ENCODE measurements at regions of chr12 and their contacts with region 1.

Region 1: GRCh38 chr12:57088459-57089248 is at the start of gene NAB2:
- DNase-seq: peak; percentile 79 to 91 (median 88)
- ATAC-seq: peak; percentile 84
- H3K4me3 ChIP-seq: peak within 1 kb of the TSS; percentile 94
- H3K4me3 Mint-ChIP-seq: peak within 1 kb of the TSS; percentile 94 to 98 (median 96)
- H3K27ac ChIP-seq: peak within 1 kb of the TSS; percentile 100
- H3K27ac Mint-ChIP-seq: peak within 1 kb of the TSS; percentile 94 to 99 (median 97)
- H3K4me1 ChIP-seq: peaks cover 23 to 46% of the 10 kb centered on the region in 2 donors
- H3K4me1 Mint-ChIP-seq: peaks cover 40 to 68% (median 58%) of the 10 kb centered on the region in 7 donors
- H3K27me3 ChIP-seq: no peaks in the 10 kb centered on the region
- H3K27me3 Mint-ChIP-seq: no peaks in the 10 kb centered on the region
- total RNA-seq, gene NAB2: 5.7 to 22.4 (median 15.5) TPM

Region 2: GRCh38 chr12:55817346-55818139 is 1271.1 kb before region 1 on chr12 and contains the starts of genes ORMDL2 and SARNP:
- CTCF ChIA-PET with region 1: no interaction called
- POLR2A ChIA-PET with region 1: no interaction called
- intact Hi-C with region 1: loop called in 1 of 2 experiments (anchors 5 kb)
- DNase-seq: peak; percentile 81 to 99 (median 98)
- ATAC-seq: peak; percentile 96
- H3K4me3 ChIP-seq: peak within 1 kb of the TSS; percentile 94
- H3K4me3 Mint-ChIP-seq: no peak within 1 kb of the TSS
- H3K27ac ChIP-seq: peak within 1 kb of the TSS; percentile 88
- H3K27ac Mint-ChIP-seq: no peak within 1 kb of the TSS
- H3K4me1 ChIP-seq: peaks cover 22 to 41% of the 10 kb centered on the region in 2 donors
- H3K4me1 Mint-ChIP-seq: peaks cover 32 to 45% (median 37%) of the 10 kb centered on the region in 7 donors
- H3K27me3 ChIP-seq: no peaks in the 10 kb centered on the region
- H3K27me3 Mint-ChIP-seq: no peaks in the 10 kb centered on the region
- total RNA-seq, gene ORMDL2: 12.3 to 67.3 (median 40.5) TPM
- total RNA-seq, gene SARNP: 28.0 to 73.0 (median 41.7) TPM

Region 3: GRCh38 chr12:56315622-56316473 is 772.8 kb before region 1 on chr12 and contains the start of gene CNPY2:
- CTCF ChIA-PET with region 1: no interaction called
- POLR2A ChIA-PET with region 1: no interaction called
- intact Hi-C with region 1: loop called in 1 of 2 experiments (anchors 5 kb)
- DNase-seq: peak; percentile 83 to 94 (median 92)
- ATAC-seq: peak; percentile 93
- H3K4me3 ChIP-seq: peak within 1 kb of the TSS; percentile 100
- H3K4me3 Mint-ChIP-seq: peak within 1 kb of the TSS; percentile 96 to 99 (median 98)
- H3K27ac ChIP-seq: peak within 1 kb of the TSS; percentile 97
- H3K27ac Mint-ChIP-seq: peak within 1 kb of the TSS; percentile 93 to 99 (median 99)
- H3K4me1 ChIP-seq: peaks cover 13 to 16% of the 10 kb centered on the region in 2 donors
- H3K4me1 Mint-ChIP-seq: peaks cover 5 to 23% (median 13%) of the 10 kb centered on the region in 7 donors
- H3K27me3 ChIP-seq: no peaks in the 10 kb centered on the region
- H3K27me3 Mint-ChIP-seq: no peaks in the 10 kb centered on the region
- total RNA-seq, gene CNPY2: 48.4 to 134 (median 87.6) TPM

Region 4: DNA sequence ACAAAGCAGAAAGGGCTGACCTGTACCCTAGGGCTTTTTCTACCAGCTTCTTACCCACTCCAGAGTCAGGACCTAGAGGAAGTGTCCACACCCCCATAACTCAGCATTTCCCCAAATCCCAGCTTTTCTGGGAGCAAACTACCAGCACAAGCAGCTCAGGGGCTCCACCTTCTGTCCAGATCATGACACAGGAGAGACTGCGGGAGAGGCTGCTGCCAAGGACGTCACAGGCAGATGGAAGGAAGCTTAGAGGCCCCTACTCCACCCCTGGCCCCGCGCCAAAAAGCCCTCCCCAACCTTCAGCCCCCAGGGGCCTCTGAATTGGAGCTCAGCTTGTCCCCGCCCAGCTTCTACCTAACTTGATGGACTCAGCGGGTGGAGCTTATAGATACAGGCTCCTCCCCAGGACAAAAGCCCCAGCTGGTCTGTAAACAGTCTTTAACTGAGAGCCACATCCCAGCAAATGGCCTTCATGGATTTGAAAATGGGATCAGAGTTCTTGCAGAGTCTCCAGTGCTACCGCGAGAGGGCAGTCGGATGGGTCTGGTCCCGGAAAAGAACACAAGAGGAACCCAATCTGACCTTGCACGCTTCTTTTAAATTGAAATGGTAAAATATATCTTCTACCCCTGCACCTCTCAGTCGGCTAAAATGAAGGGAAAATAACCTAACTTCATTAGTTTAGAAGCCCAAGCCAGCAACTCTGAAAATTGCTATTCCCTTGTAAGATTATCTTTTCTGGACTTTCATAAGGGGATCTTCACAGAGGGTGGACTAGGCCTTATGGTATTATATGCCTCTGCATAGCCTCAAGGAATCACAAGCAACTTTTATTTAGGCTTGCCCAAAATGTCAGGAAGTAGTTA is 451.7 kb before region 1 on chr12:
- CTCF ChIA-PET with region 1: no interaction called
- POLR2A ChIA-PET with region 1: interaction called, 3 read pairs
- intact Hi-C with region 1: loop called in 1 of 2 experiments (anchors 5 kb)
- DNase-seq: peak; percentile 86 to 99 (median 94)
- ATAC-seq: peak; percentile 83
- H3K4me3 ChIP-seq: peak overlapping the region; percentile 73
- H3K4me3 Mint-ChIP-seq: peak overlapping the region; percentile 87 to 100 (median 96)
- H3K27ac ChIP-seq: peak overlapping the region; percentile 83
- H3K27ac Mint-ChIP-seq: peak overlapping the region; percentile 89 to 99 (median 97)
- H3K4me1 ChIP-seq: peaks cover 27 to 36% of the 10 kb centered on the region in 2 donors
- H3K4me1 Mint-ChIP-seq: peaks cover 28 to 69% (median 57%) of the 10 kb centered on the region in 7 donors
- H3K27me3 ChIP-seq: no peaks in the 10 kb centered on the region
- H3K27me3 Mint-ChIP-seq: no peaks in the 10 kb centered on the region

Region 5: GRCh38 chr12:57005980-57006808 is 82.5 kb before region 1 on chr12 and contains the start of gene ZBTB39:
- CTCF ChIA-PET with region 1: no interaction called
- POLR2A ChIA-PET with region 1: interaction called, 3 read pairs
- intact Hi-C with region 1: loop called in 1 of 2 experiments (anchors 1 kb)
- DNase-seq: peak; percentile 51 to 84 (median 62)
- ATAC-seq: peak; percentile 91
- H3K4me3 ChIP-seq: peak within 1 kb of the TSS; percentile 63
- H3K4me3 Mint-ChIP-seq: peak within 1 kb of the TSS; percentile 90 to 94 (median 92)
- H3K27ac ChIP-seq: peak within 1 kb of the TSS; percentile 82
- H3K27ac Mint-ChIP-seq: peak within 1 kb of the TSS; percentile 92 to 95 (median 95)
- H3K4me1 ChIP-seq: peaks cover 20 to 46% of the 10 kb centered on the region in 2 donors
- H3K4me1 Mint-ChIP-seq: peaks cover 36 to 80% (median 76%) of the 10 kb centered on the region in 7 donors
- H3K27me3 ChIP-seq: no peaks in the 10 kb centered on the region
- H3K27me3 Mint-ChIP-seq: no peaks in the 10 kb centered on the region
- total RNA-seq, gene ZBTB39: 5.8 to 12.9 (median 10.7) TPM

Region 6: DNA sequence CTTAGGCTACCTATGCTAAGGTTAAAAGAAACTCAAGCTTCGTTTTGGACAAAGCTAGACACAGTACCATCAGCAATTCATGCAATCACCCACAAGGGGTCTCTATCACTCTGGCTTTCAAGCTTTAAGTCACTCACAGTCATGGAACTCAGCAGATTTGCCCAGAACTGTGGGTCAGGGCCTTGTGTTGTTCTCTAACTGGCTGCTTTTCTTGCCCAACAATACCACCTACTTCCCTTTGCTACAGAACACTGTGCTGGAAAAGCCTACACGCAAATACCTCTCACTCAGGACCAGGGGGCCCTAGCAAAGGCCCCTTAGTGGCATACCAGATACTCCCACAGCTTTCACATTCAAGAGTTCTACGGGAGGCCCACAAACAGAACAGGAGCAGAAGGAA is 19.1 kb before region 1 on chr12:
- CTCF ChIA-PET with region 1: interaction called, 44 read pairs
- POLR2A ChIA-PET with region 1: interaction called, 28 read pairs
- intact Hi-C with region 1: loop called (anchors 1 kb)
- DNase-seq: peak in 8 of 9 donors; percentile 42 to 79 (median 72)
- ATAC-seq: peak; percentile 100
- H3K4me3 ChIP-seq: no peak overlapping the region
- H3K4me3 Mint-ChIP-seq: peak overlapping the region in 8 of 10 donors; percentile 4 to 33 (median 20)
- H3K27ac ChIP-seq: peak overlapping the region; percentile 60
- H3K27ac Mint-ChIP-seq: peak overlapping the region; percentile 70 to 89 (median 83)
- H3K4me1 ChIP-seq: peaks cover 4 to 15% of the 10 kb centered on the region in 2 donors
- H3K4me1 Mint-ChIP-seq: peaks cover 13 to 50% (median 30%) of the 10 kb centered on the region in 7 donors
- H3K27me3 ChIP-seq: no peaks in the 10 kb centered on the region
- H3K27me3 Mint-ChIP-seq: no peaks in the 10 kb centered on the region

Region 7: GRCh38 chr12:57476162-57476992 is 387.7 kb after region 1 on chr12:
- CTCF ChIA-PET with region 1: no interaction called
- POLR2A ChIA-PET with region 1: no interaction called
- intact Hi-C with region 1: loop called (anchors 5 kb)
- DNase-seq: peak; percentile 58 to 85 (median 70)
- ATAC-seq: peak; percentile 53
- H3K4me3 ChIP-seq: peak overlapping the region; percentile 95
- H3K4me3 Mint-ChIP-seq: peak overlapping the region; percentile 84 to 100 (median 98)
- H3K27ac ChIP-seq: peak overlapping the region; percentile 94
- H3K27ac Mint-ChIP-seq: peak overlapping the region; percentile 97 to 100 (median 100)
- H3K4me1 ChIP-seq: peaks cover 59 to 70% of the 10 kb centered on the region in 2 donors
- H3K4me1 Mint-ChIP-seq: peaks cover 66 to 85% (median 76%) of the 10 kb centered on the region in 7 donors
- H3K27me3 ChIP-seq: no peaks in the 10 kb centered on the region
- H3K27me3 Mint-ChIP-seq: no peaks in the 10 kb centered on the region

Measured in naive thymus-derived CD4-positive, alpha-beta T cell (primary cell).